ENCODE measurements at regions of chr14 and their contacts with region 1.

Region 1: GRCh38 chr14:103904493-103905107 is 23.7 kb upstream of the TDRD9 start:
- DNase-seq: no peak
- ATAC-seq: no peak
- H3K4me3 ChIP-seq: no peak overlapping the region
- H3K27ac ChIP-seq: no peak overlapping the region
- H3K4me1 ChIP-seq: peaks cover 0 to 8% (median 1%) of the 10 kb centered on the region in 12 donors
- H3K27me3 ChIP-seq: no peaks in the 10 kb centered on the region
- CTCF ChIP-seq: no peak
- POLR2A ChIP-seq: no peak

Region 2: GRCh38 chr14:103984196-103984595 is 79.6 kb after region 1 on chr14:
- intact Hi-C with region 1: loop called in 2 of 10 experiments (anchors 5 to 10 kb)
- DNase-seq: no peak
- ATAC-seq: no peak
- H3K4me3 ChIP-seq: no peak overlapping the region
- H3K27ac ChIP-seq: no peak overlapping the region
- H3K4me1 ChIP-seq: no peaks in the 10 kb centered on the region
- H3K27me3 ChIP-seq: no peaks in the 10 kb centered on the region
- CTCF ChIP-seq: no peak
- POLR2A ChIP-seq: no peak

Measured in heart left ventricle (tissue), 16 donors.